Activated CD4-positive, alpha-beta T cell treated with anti-CD3 and anti-CD28 coated beads for 36 hours (primary cell): ENCODE measurements at regions of chr12 and their contacts with region 1.

Region 1: GRCh38 chr12:14995583-14996425 is 23.0 kb downstream of the PDE6H start:
- DNase-seq: no peak
- ATAC-seq: peak; percentile 45
- H3K4me3 Mint-ChIP-seq: no peak overlapping the region
- H3K27ac Mint-ChIP-seq: peak overlapping the region; percentile 76
- H3K4me1 Mint-ChIP-seq: peaks cover 29% of the 10 kb centered on the region
- H3K27me3 Mint-ChIP-seq: no peaks in the 10 kb centered on the region

Region 2: GRCh38 chr12:14629832-14630710 is 365.7 kb before region 1 on chr12:
- CTCF ChIA-PET with region 1: no interaction called
- POLR2A ChIA-PET with region 1: no interaction called
- intact Hi-C with region 1: loop called (anchors 1 to 5 kb)
- DNase-seq: peak; percentile 75
- ATAC-seq: peak; percentile 97
- H3K4me3 Mint-ChIP-seq: no peak overlapping the region
- H3K27ac Mint-ChIP-seq: no peak overlapping the region
- H3K4me1 Mint-ChIP-seq: no peaks in the 10 kb centered on the region
- H3K27me3 Mint-ChIP-seq: peaks cover 4% of the 10 kb centered on the region

Region 3: DNA sequence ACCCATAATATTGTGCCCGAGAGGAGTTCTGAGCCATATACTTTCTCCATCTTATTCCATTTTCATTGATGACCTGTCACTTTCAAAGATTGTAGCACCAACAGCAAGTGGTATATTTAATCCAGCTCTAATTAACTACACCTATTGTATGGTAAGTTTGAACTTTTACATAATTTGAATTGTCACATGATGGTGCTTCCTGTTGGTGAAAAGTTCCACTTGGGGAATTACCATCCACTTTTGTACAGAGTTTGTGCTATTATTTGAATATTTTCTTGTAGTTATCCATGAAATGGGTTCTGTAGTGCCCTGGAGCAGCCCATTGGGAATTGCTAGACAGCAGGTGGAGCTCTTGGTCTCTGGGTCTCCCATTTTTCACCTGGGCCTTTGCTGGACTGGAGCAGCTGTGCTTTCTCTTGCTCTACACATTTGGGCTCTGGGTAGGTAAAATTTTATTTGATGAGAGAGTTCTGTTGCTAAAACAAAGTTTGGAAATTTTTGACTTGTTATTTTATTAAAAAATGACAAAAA is 184.8 kb before region 1 on chr12:
- CTCF ChIA-PET with region 1: interaction called, 15 read pairs
- POLR2A ChIA-PET with region 1: no interaction called
- intact Hi-C with region 1: no loop called
- DNase-seq: peak; percentile 18
- ATAC-seq: no peak
- H3K4me3 Mint-ChIP-seq: no peak overlapping the region
- H3K27ac Mint-ChIP-seq: no peak overlapping the region
- H3K4me1 Mint-ChIP-seq: peaks cover 12% of the 10 kb centered on the region
- H3K27me3 Mint-ChIP-seq: no peaks in the 10 kb centered on the region

Region 4: DNA sequence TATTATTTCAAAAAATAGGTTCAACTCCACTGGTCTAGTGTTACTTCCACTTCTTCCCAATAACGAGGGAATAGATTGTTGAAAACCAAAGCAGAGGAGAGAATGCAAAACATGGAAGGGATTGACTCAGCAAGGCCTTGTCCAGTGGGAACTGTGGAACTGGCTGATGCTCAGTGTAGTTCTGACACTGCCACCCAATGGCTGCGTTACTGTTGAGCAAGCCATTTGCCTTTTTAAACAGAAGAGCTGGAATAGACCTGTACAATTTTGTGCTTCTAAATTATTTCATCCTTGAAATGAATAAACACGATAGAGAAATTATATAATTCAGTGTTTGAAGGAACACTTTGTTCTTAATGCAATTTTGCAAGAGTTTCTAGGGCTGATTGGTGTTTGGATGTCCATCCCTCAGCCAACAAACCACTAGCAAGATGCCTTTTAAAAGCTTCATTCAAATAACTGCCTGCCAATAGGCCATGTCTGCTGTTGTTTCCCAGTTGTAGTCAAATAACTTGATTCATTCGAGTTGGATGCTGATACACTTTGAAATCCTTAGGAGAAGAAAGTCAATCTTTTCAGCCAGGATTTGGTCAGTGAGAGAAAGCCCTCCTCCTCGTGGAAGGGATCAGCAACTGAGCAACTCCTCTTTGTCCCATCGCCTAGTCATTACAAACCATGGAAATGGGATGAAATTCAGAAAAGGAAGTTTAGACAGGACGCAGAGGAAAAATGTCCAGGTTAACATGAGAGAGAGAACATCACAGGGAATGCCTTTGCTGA is 102.9 kb before region 1 on chr12:
- CTCF ChIA-PET with region 1: interaction called, 11 read pairs
- POLR2A ChIA-PET with region 1: no interaction called
- intact Hi-C with region 1: no loop called
- DNase-seq: no peak
- ATAC-seq: no peak
- H3K4me3 Mint-ChIP-seq: no peak overlapping the region
- H3K27ac Mint-ChIP-seq: no peak overlapping the region
- H3K4me1 Mint-ChIP-seq: no peaks in the 10 kb centered on the region
- H3K27me3 Mint-ChIP-seq: peaks cover 4% of the 10 kb centered on the region

Region 5: GRCh38 chr12:14948672-14949071 is 47.1 kb before region 1 on chr12:
- CTCF ChIA-PET with region 1: interaction called, 6 read pairs
- POLR2A ChIA-PET with region 1: no interaction called
- intact Hi-C with region 1: loop called in 1 of 2 experiments (anchors 2 kb)
- DNase-seq: peak; percentile 68
- ATAC-seq: peak; percentile 82
- H3K4me3 Mint-ChIP-seq: peak overlapping the region; percentile 73
- H3K27ac Mint-ChIP-seq: peak overlapping the region; percentile 96
- H3K4me1 Mint-ChIP-seq: peaks cover 87% of the 10 kb centered on the region
- H3K27me3 Mint-ChIP-seq: no peaks in the 10 kb centered on the region

Region 6: GRCh38 chr12:14972816-14973215 is 23.0 kb before region 1 on chr12 and contains the start of gene PDE6H:
- CTCF ChIA-PET with region 1: interaction called, 11 read pairs
- POLR2A ChIA-PET with region 1: no interaction called
- intact Hi-C with region 1: no loop called
- DNase-seq: no peak
- ATAC-seq: no peak
- H3K4me3 Mint-ChIP-seq: no peak within 1 kb of the TSS
- H3K27ac Mint-ChIP-seq: no peak within 1 kb of the TSS
- H3K4me1 Mint-ChIP-seq: peaks cover 31% of the 10 kb centered on the region
- H3K27me3 Mint-ChIP-seq: no peaks in the 10 kb centered on the region
- total RNA-seq, gene PDE6H: 0.25 TPM in 1 of 2 experiments, not detected in the other

Region 7: GRCh38 chr12:15220994-15221885 is 225.4 kb after region 1 on chr12 and contains the start of gene RERG:
- CTCF ChIA-PET with region 1: interaction called, 7 read pairs
- POLR2A ChIA-PET with region 1: no interaction called
- intact Hi-C with region 1: loop called (anchors 2 to 5 kb)
- DNase-seq: peak; percentile 86
- ATAC-seq: peak; percentile 99
- H3K4me3 Mint-ChIP-seq: peak within 1 kb of the TSS; percentile 36
- H3K27ac Mint-ChIP-seq: no peak within 1 kb of the TSS
- H3K4me1 Mint-ChIP-seq: peaks cover 2% of the 10 kb centered on the region
- H3K27me3 Mint-ChIP-seq: peaks cover 32% of the 10 kb centered on the region
- total RNA-seq, gene RERG: not detected